CD4-positive, alpha-beta memory T cell (primary cell): ENCODE measurements at regions of chr22 and their contacts with region 1.

Region 1: DNA sequence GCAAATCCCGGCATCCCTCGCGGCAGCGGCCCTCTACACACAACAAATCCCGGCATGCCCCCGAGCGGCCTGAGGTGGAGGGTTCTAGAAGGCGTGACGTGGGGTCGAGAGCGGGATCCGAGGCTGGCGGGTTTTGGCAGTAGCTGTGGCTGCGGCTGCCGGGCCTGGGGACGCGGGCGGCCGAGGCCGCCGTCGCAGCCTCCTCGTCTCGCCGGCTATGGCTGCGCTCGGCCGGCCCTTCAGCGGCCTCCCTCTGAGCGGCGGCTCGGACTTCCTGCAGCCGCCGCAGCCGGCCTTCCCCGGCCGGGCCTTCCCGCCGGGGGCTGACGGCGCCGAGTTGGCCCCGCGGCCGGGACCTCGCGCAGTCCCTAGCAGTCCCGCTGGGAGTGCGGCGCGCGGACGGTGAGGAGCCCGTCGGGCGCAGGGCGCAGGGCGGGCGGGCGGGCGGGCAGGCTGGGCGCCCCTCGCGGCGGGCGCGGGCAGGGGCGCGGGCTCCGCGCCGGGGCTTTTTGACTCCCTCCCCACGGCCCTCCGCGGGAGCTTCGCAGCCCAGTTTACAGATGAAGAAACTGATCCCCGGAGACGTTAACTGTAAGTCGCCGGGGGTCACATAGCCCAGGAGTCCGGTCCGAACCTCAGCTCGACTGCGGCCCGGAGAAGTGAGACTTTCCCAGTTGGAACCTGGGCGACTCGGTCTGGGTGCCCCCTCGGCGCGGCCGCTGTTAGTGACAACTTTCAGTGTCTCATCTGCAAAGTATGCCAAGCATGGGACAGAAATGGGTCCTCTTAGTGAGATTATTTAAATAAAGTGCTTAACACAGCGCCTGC is at the start of gene CCDC117:
- DNase-seq: peak; percentile 87 to 96 (median 88)
- H3K4me3 ChIP-seq: peak within 1 kb of the TSS; percentile 72 to 86
- H3K4me3 Mint-ChIP-seq: peak within 1 kb of the TSS; percentile 93 to 99 (median 96)
- H3K27ac ChIP-seq: peak within 1 kb of the TSS; percentile 84
- H3K27ac Mint-ChIP-seq: peak within 1 kb of the TSS; percentile 89 to 97 (median 94)
- H3K4me1 ChIP-seq: peaks cover 35% of the 10 kb centered on the region
- H3K4me1 Mint-ChIP-seq: peaks cover 17 to 36% (median 25%) of the 10 kb centered on the region in 4 donors
- H3K27me3 ChIP-seq: no peaks in the 10 kb centered on the region
- H3K27me3 Mint-ChIP-seq: no peaks in the 10 kb centered on the region
- total RNA-seq, gene CCDC117: 20.3 to 20.6 TPM

Region 2: DNA sequence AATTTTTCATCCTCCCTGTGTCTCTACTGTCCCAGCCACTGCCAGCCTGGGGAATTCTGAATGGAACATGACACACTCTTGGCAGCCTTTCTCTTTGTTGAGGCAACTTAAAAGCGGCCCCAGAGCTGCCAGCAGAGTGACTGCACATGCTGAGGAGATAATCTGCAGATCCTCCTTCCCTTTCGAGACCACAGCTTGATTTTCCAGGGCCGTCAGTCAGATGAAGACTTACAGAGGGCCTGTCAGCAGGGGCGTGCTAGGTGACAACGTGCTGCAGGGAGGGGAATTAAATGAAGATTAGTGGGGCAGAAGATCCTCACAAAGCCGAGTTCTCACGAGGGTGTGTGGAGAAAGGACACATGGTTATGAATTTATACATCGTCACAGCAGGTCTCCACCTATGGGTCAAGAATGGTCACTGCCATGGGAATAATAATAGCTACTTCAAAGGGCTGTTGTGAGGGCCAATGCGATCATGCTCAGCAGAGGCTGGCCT is 660.3 kb before region 1 on chr22:
- CTCF ChIA-PET with region 1: no interaction called
- POLR2A ChIA-PET with region 1: no interaction called
- intact Hi-C with region 1: no loop called
- DNase-seq: peak in 1 of 5 donors; percentile 26
- H3K4me3 ChIP-seq: no peak overlapping the region
- H3K4me3 Mint-ChIP-seq: no peak overlapping the region
- H3K27ac ChIP-seq: no peak overlapping the region
- H3K27ac Mint-ChIP-seq: no peak overlapping the region
- H3K4me1 ChIP-seq: no peaks in the 10 kb centered on the region
- H3K4me1 Mint-ChIP-seq: peaks cover 0 to 1% (median 0%) of the 10 kb centered on the region in 4 donors
- H3K27me3 ChIP-seq: no peaks in the 10 kb centered on the region
- H3K27me3 Mint-ChIP-seq: peaks cover 3 to 6% of the 10 kb centered on the region in 2 donors

Region 3: DNA sequence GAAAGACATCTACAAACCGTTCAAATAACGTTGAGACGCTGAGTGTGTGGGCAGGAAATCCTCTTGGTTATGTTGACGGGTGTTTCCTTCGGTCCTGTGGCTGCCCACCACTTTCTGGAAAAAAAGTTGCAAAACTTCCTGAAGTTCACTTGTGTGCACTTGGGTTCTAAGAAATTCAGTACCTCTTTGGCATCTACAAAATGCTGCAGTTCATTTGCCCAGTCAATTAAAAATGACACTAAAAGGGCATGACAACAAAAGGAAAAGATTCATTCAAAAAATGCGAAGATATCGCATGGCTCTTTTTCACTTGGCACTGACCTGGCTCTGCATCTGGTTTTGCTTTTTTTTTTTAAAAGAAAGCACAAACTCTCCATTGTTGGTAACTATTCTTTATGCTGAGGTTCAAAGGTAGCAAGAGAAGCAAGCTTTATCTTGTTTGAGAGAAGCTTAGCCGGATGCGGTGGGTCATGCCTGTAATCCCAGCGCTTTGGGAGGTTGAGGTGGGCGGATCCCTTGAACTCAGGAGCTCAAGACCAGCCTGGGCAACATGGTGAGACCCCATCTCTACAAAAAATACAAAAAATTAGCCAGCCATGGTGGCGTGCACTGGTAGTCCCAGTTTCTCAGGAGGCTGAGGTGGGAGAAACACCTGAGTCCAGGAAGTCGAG is 38.1 kb after region 1 on chr22:
- CTCF ChIA-PET with region 1: interaction called, 4 read pairs
- POLR2A ChIA-PET with region 1: interaction called, 3 read pairs
- intact Hi-C with region 1: loop called (anchors 5 kb)
- DNase-seq: peak; percentile 49 to 63 (median 60)
- H3K4me3 ChIP-seq: peak overlapping the region in 1 of 2 donors; percentile 29
- H3K4me3 Mint-ChIP-seq: peak overlapping the region; percentile 72 to 88 (median 86)
- H3K27ac ChIP-seq: peak overlapping the region; percentile 31
- H3K27ac Mint-ChIP-seq: peak overlapping the region; percentile 83 to 94 (median 90)
- H3K4me1 ChIP-seq: peaks cover 77% of the 10 kb centered on the region
- H3K4me1 Mint-ChIP-seq: peaks cover 46 to 94% (median 70%) of the 10 kb centered on the region in 4 donors
- H3K27me3 ChIP-seq: no peaks in the 10 kb centered on the region
- H3K27me3 Mint-ChIP-seq: no peaks in the 10 kb centered on the region

Region 4: DNA sequence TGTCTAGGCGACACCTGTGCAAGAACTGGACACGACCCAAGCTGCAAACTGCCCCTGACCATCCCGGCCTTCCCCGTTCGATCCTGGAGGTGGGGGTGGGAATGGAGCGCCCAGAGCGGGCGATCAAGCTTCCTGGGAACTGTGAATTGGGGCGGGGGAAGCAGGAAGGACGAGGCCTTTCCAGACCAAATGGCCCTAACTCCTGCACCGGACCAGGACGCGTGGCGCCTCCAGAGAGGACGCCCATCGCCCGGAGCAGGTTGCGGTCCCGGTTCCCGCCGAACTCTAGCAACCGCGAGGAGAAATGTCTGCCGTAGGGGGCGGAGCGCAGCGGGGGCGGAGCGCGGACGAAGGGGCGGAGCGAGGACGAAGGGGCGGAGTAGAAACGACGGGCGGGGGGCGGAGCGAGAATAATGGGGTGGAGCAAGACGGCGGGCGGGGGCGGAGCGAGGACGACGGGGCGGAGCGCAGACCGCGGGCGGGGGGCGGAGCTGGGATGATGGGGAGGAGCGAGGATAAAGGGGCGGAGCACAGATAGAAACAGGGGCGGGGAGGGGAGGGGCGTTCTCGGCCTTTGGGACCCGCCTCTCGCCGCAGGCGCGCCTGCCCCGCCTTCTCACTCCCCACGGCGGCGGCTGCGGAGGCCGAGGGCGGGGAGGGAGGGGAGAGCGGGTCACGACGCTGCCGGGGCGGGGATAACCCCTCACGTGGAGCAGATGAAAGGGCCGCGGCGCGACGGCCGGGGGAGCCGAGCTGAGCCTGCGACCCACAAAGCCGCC is 110.2 kb after region 1 on chr22 and contains the start of gene ZNRF3:
- CTCF ChIA-PET with region 1: no interaction called
- POLR2A ChIA-PET with region 1: no interaction called
- intact Hi-C with region 1: loop called (anchors 1 kb)
- DNase-seq: peak; percentile 86 to 90 (median 87)
- H3K4me3 ChIP-seq: peak within 1 kb of the TSS; percentile 61 to 83
- H3K4me3 Mint-ChIP-seq: peak within 1 kb of the TSS; percentile 88 to 92 (median 90)
- H3K27ac ChIP-seq: no peak within 1 kb of the TSS
- H3K27ac Mint-ChIP-seq: peak within 1 kb of the TSS; percentile 74 to 87 (median 81)
- H3K4me1 ChIP-seq: peaks cover 15% of the 10 kb centered on the region
- H3K4me1 Mint-ChIP-seq: peaks cover 9 to 32% (median 21%) of the 10 kb centered on the region in 4 donors
- H3K27me3 ChIP-seq: no peaks in the 10 kb centered on the region
- H3K27me3 Mint-ChIP-seq: peaks cover 5 to 7% of the 10 kb centered on the region in 2 donors
- total RNA-seq, gene ZNRF3: 0.70 to 0.89 TPM